GM12878 (cell line): ENCODE measurements at regions of chr2 and their contacts with region 1.

Region 1: GRCh38 chr2:219294356-219295351 is 14.5 kb downstream of the PTPRN start:
- DNase-seq: peak; percentile 60
- ATAC-seq: peak; percentile 93
- H3K4me3 ChIP-seq: peak overlapping the region; percentile 59; the same call in 1 of the 2 replicates
- H3K27ac ChIP-seq: no peak overlapping the region
- H3K4me1 ChIP-seq: peaks cover 8% of the 10 kb centered on the region
- H3K27me3 ChIP-seq: peaks cover 0 to 6% of the 10 kb centered on the region in 2 experiments; a peak in 2 of 4 replicates
- CTCF ChIP-seq: peak; percentile 98 to 99 (median 99)
- EP300 ChIP-seq: no peak
- POLR2A ChIP-seq: peak; percentile 77
- RAD21 ChIP-seq: peak; percentile 77

Region 2: DNA sequence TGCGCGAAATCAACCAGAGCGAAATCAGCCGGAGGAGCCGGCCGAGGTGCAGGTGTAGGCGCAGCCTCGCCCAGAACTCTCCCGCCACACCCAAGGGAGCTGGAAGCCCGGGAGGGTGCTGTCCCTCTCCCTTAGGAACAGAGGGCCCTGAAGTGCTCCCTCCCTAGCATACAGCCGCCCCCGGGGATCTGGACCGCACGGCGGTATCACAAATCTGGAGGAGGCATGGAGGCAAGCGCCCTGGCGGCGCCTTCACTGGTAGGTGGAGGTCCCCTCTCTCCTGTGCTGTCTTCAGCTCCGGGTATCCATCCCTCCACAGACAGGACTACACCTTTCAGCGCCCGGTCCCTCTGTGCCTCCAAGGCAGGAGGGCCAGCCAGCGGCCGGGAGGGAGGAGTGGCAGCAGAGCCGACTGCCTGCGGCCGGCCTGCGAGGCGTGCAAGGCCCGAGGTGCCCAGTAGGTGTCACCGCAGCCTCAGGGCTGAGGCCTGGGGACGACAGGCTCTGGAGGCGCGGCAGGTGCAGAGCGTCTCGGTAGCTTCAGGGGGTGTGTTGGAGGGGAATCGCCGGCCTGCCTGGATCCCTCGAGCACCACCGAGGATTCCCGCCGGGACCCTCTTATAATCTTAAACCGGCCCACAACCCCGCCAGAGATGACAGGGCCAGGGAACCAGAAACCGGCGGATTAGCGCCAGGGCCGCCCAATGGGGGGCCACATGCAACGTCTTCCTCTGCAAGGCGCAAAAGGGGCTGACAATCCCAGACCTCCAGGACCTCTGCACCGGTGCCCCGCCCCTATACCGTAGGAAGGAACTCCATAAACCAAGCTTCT is 236.7 kb before region 1 on chr2:
- CTCF ChIA-PET with region 1: interaction called, 3 read pairs
- POLR2A ChIA-PET with region 1: no interaction called
- RAD21 ChIA-PET with region 1: no interaction called
- SMC1A ChIA-PET with region 1: no interaction called
- in situ Hi-C with region 1: loop called (anchors 5 kb)
- intact Hi-C with region 1: loop called (anchors 5 kb)
- DNase-seq: no peak
- ATAC-seq: peak; percentile 99
- H3K4me3 ChIP-seq: no peak overlapping the region
- H3K27ac ChIP-seq: no peak overlapping the region
- H3K4me1 ChIP-seq: no peaks in the 10 kb centered on the region
- H3K27me3 ChIP-seq: peaks cover 23 to 26% of the 10 kb centered on the region in 2 experiments
- CTCF ChIP-seq: peak; percentile 80 to 93 (median 82)
- EP300 ChIP-seq: no peak
- POLR2A ChIP-seq: no peak
- RAD21 ChIP-seq: peak; percentile 84

Region 3: DNA sequence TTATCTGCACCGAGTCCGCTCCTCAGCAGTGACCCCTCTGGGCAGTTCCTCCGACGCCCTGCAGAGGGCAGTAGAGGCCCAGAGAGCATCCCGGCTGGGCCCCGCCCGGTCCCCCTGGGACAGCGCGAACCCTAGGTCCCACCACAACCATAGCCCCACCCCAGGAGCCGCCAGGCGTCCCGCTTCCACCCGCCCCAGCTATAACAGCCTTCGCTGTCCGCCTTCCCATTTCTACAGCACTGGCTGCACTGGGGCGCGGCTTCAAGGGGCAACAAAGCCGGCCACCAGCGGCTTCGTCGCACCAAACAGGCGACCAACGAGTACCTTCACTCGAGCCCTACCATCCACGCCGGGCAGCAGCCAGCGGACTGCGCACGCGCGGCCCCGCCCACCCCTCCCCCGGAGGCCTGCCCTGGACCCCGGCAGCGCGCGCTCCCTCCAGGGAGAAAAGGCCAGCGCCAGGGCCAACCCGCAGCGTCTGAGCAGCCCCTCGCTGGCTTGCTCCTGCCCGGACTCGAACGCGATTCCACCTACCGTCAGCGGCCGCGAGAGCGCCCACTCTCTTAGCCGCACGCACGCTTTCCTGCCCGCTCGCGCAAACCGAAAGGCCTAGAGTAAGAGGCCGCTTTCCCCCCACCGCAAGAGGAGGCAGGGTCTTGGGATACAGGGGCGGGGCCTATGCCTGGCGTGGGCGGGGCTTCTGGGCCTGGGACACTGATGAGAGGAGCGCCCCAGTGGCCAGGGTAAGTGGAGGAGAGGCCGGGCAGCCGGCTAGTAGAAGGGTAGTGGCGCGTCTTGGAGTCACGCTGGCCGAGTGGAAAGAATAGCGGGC is 134.3 kb before region 1 on chr2 and contains the start of gene NHEJ1:
- CTCF ChIA-PET with region 1: interaction called, 208 read pairs
- POLR2A ChIA-PET with region 1: interaction called, 15 read pairs
- RAD21 ChIA-PET with region 1: interaction called, 30 read pairs
- SMC1A ChIA-PET with region 1: interaction called, 49 read pairs
- in situ Hi-C with region 1: loop called (anchors 5 kb)
- intact Hi-C with region 1: loop called (anchors 1 kb)
- DNase-seq: peak; percentile 65
- ATAC-seq: peak; percentile 97
- H3K4me3 ChIP-seq: peak within 1 kb of the TSS; percentile 85
- H3K27ac ChIP-seq: peak within 1 kb of the TSS; percentile 78
- H3K4me1 ChIP-seq: peaks cover 4% of the 10 kb centered on the region; the same call in 1 of the 2 replicates
- H3K27me3 ChIP-seq: no peaks in the 10 kb centered on the region
- CTCF ChIP-seq: peak; percentile 89 to 99 (median 97); a peak in 5 of 6 replicates
- EP300 ChIP-seq: no peak
- POLR2A ChIP-seq: peak; percentile 87
- RAD21 ChIP-seq: peak; percentile 82
- polyA plus RNA-seq, gene NHEJ1: 17.8 to 20.2 TPM

Region 4: DNA sequence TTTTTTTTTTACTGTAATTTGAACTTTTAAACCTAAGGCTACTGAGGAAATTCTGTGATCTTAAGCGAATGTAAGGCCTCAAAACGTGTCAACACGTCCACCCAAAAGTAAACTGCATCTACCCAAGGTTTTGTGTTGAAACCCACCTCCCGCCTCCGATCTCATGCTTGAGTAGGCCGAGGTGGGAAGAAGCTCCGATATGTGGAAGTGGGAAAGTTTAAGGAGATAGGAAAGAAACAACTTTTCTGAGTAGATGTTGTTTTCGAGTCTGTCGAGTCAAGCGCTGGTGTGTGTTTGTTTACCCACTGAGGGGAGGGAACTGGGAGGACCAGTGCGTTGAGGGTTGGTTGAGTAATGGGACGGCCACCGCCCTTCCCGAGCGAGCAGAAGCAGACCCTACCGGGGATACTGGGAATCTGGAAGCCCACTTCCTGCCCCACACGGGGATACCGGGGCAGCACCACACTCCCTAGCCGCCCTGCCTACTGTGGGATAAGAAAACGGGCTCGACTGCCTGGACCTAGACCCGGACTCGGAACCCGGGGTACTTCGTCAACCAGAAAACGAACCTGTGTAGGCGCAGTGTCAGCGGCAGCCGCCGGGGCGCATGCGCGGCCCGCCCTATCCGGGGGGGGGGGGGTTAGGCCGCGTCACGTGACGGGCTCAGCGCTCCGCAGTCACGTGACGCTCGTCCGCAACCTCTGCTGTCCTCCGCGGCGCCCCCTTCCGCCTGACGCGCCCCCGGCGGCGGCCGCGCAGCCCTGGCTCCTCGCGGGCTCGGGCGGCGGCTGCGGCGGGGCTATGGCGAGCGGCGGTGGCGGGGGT is 116.9 kb before region 1 on chr2 and contains the start of gene RETREG2:
- CTCF ChIA-PET with region 1: interaction called, 52 read pairs
- POLR2A ChIA-PET with region 1: interaction called, 12 read pairs
- RAD21 ChIA-PET with region 1: interaction called, 33 read pairs
- SMC1A ChIA-PET with region 1: interaction called, 11 read pairs
- in situ Hi-C with region 1: no loop called
- intact Hi-C with region 1: loop called (anchors 5 kb)
- DNase-seq: peak; percentile 72
- ATAC-seq: peak; percentile 62
- H3K4me3 ChIP-seq: peak within 1 kb of the TSS; percentile 83
- H3K27ac ChIP-seq: peak within 1 kb of the TSS; percentile 98
- H3K4me1 ChIP-seq: peaks cover 10% of the 10 kb centered on the region
- H3K27me3 ChIP-seq: no peaks in the 10 kb centered on the region
- CTCF ChIP-seq: peak; percentile 26 to 53 (median 35); a peak in 4 of 6 replicates
- EP300 ChIP-seq: peak in 1 of 2 experiments; percentile 50; a peak in 2 of 4 replicates
- POLR2A ChIP-seq: peak; percentile 91
- RAD21 ChIP-seq: no peak
- polyA plus RNA-seq, gene RETREG2: 10.1 to 25.2 TPM

Region 5: GRCh38 chr2:219218732-219219701 is 75.6 kb before region 1 on chr2 and contains the start of gene ABCB6:
- CTCF ChIA-PET with region 1: interaction called, 11 read pairs
- POLR2A ChIA-PET with region 1: interaction called, 3 read pairs
- RAD21 ChIA-PET with region 1: interaction called, 4 read pairs
- SMC1A ChIA-PET with region 1: interaction called, 7 read pairs
- in situ Hi-C with region 1: no loop called
- intact Hi-C with region 1: loop called (anchors 2 kb)
- DNase-seq: peak; percentile 63
- ATAC-seq: peak; percentile 92
- H3K4me3 ChIP-seq: peak within 1 kb of the TSS; percentile 92
- H3K27ac ChIP-seq: peak within 1 kb of the TSS; percentile 63
- H3K4me1 ChIP-seq: peaks cover 16% of the 10 kb centered on the region
- H3K27me3 ChIP-seq: no peaks in the 10 kb centered on the region
- CTCF ChIP-seq: no peak
- EP300 ChIP-seq: no peak
- POLR2A ChIP-seq: peak; percentile 95
- RAD21 ChIP-seq: no peak
- polyA plus RNA-seq, gene ABCB6: 2.3 to 10.1 TPM

Region 6: DNA sequence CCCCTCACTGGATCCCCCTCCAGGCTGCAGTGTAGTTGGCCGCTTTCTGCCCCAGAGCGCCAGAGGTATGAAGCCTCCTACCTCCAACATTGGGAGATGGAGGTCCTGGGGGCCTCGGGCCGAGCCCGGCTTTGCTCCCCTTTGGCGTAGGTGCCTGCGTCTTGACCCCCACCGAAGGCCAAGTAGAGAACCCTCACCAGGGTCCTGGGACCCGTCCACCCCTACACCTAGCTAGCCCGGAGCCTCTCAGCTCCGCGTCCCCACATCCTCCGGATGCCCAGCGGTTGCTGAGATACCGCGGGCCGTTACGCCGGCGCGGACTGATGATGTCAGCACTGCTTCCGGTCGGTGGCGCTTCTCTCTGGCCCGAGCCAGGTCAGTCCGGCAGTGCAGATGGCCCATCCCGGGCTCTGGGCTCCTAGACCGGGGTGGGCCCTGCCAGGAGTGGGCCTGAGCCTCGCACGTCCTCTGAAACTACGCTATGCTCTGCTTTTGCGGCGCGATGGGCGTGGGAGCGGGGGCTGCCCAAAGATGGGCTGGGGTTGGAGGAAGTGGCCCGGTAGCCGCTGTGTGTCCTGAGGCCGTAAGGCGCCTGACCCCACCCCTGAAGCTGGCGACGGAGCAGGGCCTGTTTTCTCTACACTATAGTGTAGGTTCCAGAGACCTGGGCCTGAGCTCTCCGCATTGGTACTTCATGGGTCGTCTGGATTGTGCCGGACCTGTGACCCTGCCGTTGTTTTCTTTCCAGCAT is 49.3 kb before region 1 on chr2 and contains the starts of genes GLB1L and STK16:
- CTCF ChIA-PET with region 1: interaction called, 61 read pairs
- POLR2A ChIA-PET with region 1: interaction called, 22 read pairs
- RAD21 ChIA-PET with region 1: interaction called, 18 read pairs
- SMC1A ChIA-PET with region 1: interaction called, 13 read pairs
- in situ Hi-C with region 1: no loop called
- intact Hi-C with region 1: no loop called
- DNase-seq: peak; percentile 75
- ATAC-seq: peak; percentile 83
- H3K4me3 ChIP-seq: peak within 1 kb of the TSS; percentile 90
- H3K27ac ChIP-seq: peak within 1 kb of the TSS; percentile 70
- H3K4me1 ChIP-seq: peaks cover 44% of the 10 kb centered on the region
- H3K27me3 ChIP-seq: no peaks in the 10 kb centered on the region
- CTCF ChIP-seq: no peak
- EP300 ChIP-seq: no peak
- POLR2A ChIP-seq: peak; percentile 96
- RAD21 ChIP-seq: no peak
- polyA plus RNA-seq, gene GLB1L: 0.29 to 1.0 TPM
- polyA plus RNA-seq, gene STK16: 8.4 to 9.0 TPM

Region 7: GRCh38 chr2:219261024-219261855 is 33.4 kb before region 1 on chr2:
- CTCF ChIA-PET with region 1: interaction called, 21 read pairs
- POLR2A ChIA-PET with region 1: interaction called, 4 read pairs
- RAD21 ChIA-PET with region 1: interaction called, 4 read pairs
- SMC1A ChIA-PET with region 1: interaction called, 5 read pairs
- in situ Hi-C with region 1: no loop called
- intact Hi-C with region 1: no loop called
- DNase-seq: no peak
- ATAC-seq: 0 out of 3 replicates have a peak, but pooled peaks have one; percentile 23
- H3K4me3 ChIP-seq: no peak overlapping the region
- H3K27ac ChIP-seq: no peak overlapping the region
- H3K4me1 ChIP-seq: no peaks in the 10 kb centered on the region
- H3K27me3 ChIP-seq: peaks cover 0 to 4% of the 10 kb centered on the region in 2 experiments; a peak in 1 of 4 replicates
- CTCF ChIP-seq: no peak
- EP300 ChIP-seq: no peak
- POLR2A ChIP-seq: no peak
- RAD21 ChIP-seq: no peak

Region 8: DNA sequence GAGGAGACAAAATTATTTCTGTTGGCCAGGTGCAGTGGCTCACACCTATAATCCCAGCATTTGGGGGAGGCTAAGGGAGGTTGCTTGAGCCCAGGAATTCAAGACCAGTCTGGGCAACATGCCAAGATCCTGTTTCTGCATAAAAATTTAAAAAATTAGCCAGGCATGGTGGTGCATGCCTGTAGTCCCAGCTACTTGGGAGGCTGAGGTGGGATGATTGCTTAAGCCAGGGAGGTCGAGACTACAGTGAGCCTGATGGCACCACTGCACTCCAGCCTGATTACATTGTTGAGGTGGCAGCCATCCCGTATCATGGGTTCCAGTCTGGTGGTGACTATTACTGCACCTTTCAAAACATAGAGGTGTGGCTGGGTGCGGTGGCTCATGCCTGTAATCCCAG is 286.8 kb after region 1 on chr2:
- CTCF ChIA-PET with region 1: no interaction called
- POLR2A ChIA-PET with region 1: no interaction called
- RAD21 ChIA-PET with region 1: no interaction called
- SMC1A ChIA-PET with region 1: no interaction called
- in situ Hi-C with region 1: no loop called
- intact Hi-C with region 1: no loop called
- DNase-seq: no peak
- ATAC-seq: no peak
- H3K4me3 ChIP-seq: no peak overlapping the region
- H3K27ac ChIP-seq: no peak overlapping the region
- H3K4me1 ChIP-seq: no peaks in the 10 kb centered on the region
- H3K27me3 ChIP-seq: peaks cover 1 to 3% of the 10 kb centered on the region in 2 experiments; a peak in 2 of 4 replicates
- CTCF ChIP-seq: no peak
- EP300 ChIP-seq: no peak
- POLR2A ChIP-seq: no peak
- RAD21 ChIP-seq: no peak